ENCODE measurements at regions of chr6 and their contacts with region 1.

Region 1: DNA sequence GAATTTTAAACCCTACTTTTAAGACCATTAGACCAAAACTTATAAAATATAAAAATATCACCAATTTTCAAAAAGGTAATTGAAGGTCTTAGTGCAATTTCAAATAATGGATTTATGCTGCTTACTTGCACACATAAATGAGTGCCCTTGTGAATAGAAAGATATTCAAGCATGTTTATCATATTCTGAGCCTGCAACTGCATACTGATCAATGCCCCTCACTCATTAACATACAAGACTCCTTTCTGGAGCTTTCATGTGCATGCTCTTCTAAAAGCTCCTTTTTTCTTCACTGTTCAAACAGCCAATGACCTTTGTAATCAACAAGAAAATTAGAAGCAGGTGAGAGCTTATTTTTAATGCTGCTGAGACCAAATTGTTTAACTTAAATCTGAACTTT is 1139.3 kb downstream of the HACE1 start:
- DNase-seq: no peak
- H3K4me3 Mint-ChIP-seq: no peak overlapping the region
- H3K27ac Mint-ChIP-seq: no peak overlapping the region
- H3K4me1 Mint-ChIP-seq: no peaks in the 10 kb centered on the region
- H3K27me3 Mint-ChIP-seq: no peaks in the 10 kb centered on the region
- CTCF ChIP-seq: no peak

Region 2: GRCh38 chr6:103675807-103676406 is 44.5 kb before region 1 on chr6:
- CTCF ChIA-PET with region 1: no interaction called
- intact Hi-C with region 1: no loop called
- DNase-seq: peak; percentile 4
- H3K4me3 Mint-ChIP-seq: peak overlapping the region; percentile 54
- H3K27ac Mint-ChIP-seq: peak overlapping the region; percentile 45
- H3K4me1 Mint-ChIP-seq: peaks cover 12% of the 10 kb centered on the region
- H3K27me3 Mint-ChIP-seq: no peaks in the 10 kb centered on the region
- CTCF ChIP-seq: no peak

Region 3: DNA sequence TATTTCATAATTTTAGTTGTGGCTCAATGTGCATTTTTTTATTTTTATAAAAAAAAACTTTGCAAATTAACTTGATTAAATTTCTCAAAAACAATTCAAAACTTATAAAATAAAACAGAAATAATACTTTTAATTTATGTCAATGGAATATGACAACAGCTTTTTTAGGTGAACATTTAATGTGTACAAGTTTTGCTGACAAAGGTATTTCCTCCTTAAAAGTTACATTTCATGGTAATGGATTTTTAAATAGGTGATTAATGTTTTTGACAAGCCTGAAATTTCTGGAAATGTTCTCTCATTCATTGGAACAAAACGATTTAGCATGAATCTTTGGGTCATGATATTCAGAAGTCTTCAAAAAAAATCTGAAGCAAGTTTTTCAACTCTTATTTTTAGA is 20.6 kb before region 1 on chr6:
- CTCF ChIA-PET with region 1: no interaction called
- intact Hi-C with region 1: loop called (anchors 2 kb)
- DNase-seq: no peak
- H3K4me3 Mint-ChIP-seq: no peak overlapping the region
- H3K27ac Mint-ChIP-seq: no peak overlapping the region
- H3K4me1 Mint-ChIP-seq: no peaks in the 10 kb centered on the region
- H3K27me3 Mint-ChIP-seq: no peaks in the 10 kb centered on the region
- CTCF ChIP-seq: no peak

Measured in Calu3 (cell line).